Heart left ventricle (tissue), 16 donors: ENCODE measurements at regions of chr22 and their contacts with region 1.

Region 1: DNA sequence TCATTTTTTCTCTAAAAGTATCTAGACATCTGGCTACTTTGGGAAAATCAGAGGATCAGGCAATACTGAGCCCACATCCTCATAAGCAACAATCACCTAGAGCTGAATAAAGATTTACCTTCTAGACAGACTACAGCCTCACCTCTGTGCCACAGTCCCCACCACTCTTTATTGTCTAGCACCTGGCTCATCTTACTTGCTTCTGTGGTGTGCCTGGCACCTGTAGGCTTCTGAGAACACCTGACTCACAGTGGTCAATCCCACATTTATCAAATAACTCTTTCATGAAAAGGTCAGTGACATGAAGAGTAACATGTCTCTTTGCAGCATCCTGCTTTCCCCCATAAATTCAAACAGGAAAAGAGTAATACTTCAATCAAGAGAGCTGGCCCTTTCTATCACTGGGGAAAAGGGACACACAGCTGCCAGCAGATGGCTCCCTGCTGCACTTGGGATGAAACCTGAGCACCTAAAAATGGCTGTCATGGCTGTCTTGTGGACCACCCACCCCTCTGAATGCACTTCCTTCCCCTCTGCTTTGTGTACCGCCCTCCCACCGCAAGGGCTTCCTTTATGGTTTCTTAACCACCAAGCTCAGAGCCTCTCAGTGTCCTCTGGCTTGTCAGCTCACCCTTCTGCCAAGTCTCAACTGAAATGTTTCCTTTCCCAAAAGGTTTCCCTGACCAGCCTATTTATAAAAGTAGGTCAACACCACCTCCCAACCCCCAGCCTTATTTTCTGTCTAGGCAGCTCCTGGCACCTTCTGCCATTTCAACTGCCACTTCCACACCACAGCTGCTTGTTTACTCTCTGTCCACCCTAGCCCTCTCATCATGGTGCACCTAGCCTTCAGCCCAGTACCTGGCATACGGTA is 9.3 kb downstream of the TFIP11 start:
- DNase-seq: peak in 4 of 5 donors; percentile 23 to 60 (median 37)
- ATAC-seq: peak; percentile 87 to 90 (median 88)
- H3K4me3 ChIP-seq: peak overlapping the region in 3 of 12 donors; percentile 11 to 19 (median 13)
- H3K27ac ChIP-seq: peak overlapping the region; percentile 43 to 83 (median 66)
- H3K4me1 ChIP-seq: peaks cover 0 to 25% (median 17%) of the 10 kb centered on the region in 12 donors
- H3K27me3 ChIP-seq: no peaks in the 10 kb centered on the region
- CTCF ChIP-seq: peak; percentile 26 to 67 (median 54)
- POLR2A ChIP-seq: no peak

Region 2: GRCh38 chr22:26550498-26551033 is 47.6 kb after region 1 on chr22:
- intact Hi-C with region 1: loop called in 1 of 10 experiments (anchors 5 kb)
- DNase-seq: peak in 4 of 5 donors; percentile 69 to 86 (median 74)
- ATAC-seq: peak; percentile 85 to 92 (median 86)
- H3K4me3 ChIP-seq: no peak overlapping the region
- H3K27ac ChIP-seq: peak overlapping the region; percentile 62 to 89 (median 80)
- H3K4me1 ChIP-seq: peaks cover 0 to 85% (median 47%) of the 10 kb centered on the region in 12 donors
- H3K27me3 ChIP-seq: no peaks in the 10 kb centered on the region
- CTCF ChIP-seq: no peak
- POLR2A ChIP-seq: no peak

Region 3: GRCh38 chr22:26589845-26590736 is 87.2 kb after region 1 on chr22 and contains the start of gene TPST2:
- intact Hi-C with region 1: loop called in 1 of 10 experiments (anchors 5 kb)
- DNase-seq: peak; percentile 80 to 92 (median 83)
- ATAC-seq: peak; percentile 83 to 95 (median 94)
- H3K4me3 ChIP-seq: peak within 1 kb of the TSS; percentile 79 to 98 (median 92)
- H3K27ac ChIP-seq: peak within 1 kb of the TSS in 11 of 12 donors; percentile 77 to 91 (median 89)
- H3K4me1 ChIP-seq: peaks cover 3 to 66% (median 24%) of the 10 kb centered on the region in 12 donors
- H3K27me3 ChIP-seq: no peaks in the 10 kb centered on the region
- CTCF ChIP-seq: peak in 3 of 12 donors; percentile 6 to 29 (median 17)
- POLR2A ChIP-seq: peak; percentile 71 to 92
- total RNA-seq, gene TPST2: 12.1 to 103 (median 25.2) TPM

Region 4: GRCh38 chr22:26650722-26651421 is 147.9 kb after region 1 on chr22:
- intact Hi-C with region 1: loop called in 1 of 10 experiments (anchors 5 kb)
- DNase-seq: no peak
- ATAC-seq: no peak
- H3K4me3 ChIP-seq: no peak overlapping the region
- H3K27ac ChIP-seq: no peak overlapping the region
- H3K4me1 ChIP-seq: peaks cover 0 to 22% (median 0%) of the 10 kb centered on the region in 12 donors
- H3K27me3 ChIP-seq: peaks cover 0 to 52% (median 12%) of the 10 kb centered on the region in 9 donors
- CTCF ChIP-seq: no peak
- POLR2A ChIP-seq: no peak